ENCODE measurements at regions of chr14 and their contacts with region 1.

Region 1: GRCh38 chr14:104639889-104640548 is 35.4 kb upstream of the TMEM179 start:
- DNase-seq: no peak
- ATAC-seq: peak; percentile 99
- H3K4me3 ChIP-seq: no peak overlapping the region
- H3K27ac ChIP-seq: no peak overlapping the region
- H3K4me1 ChIP-seq: no peaks in the 10 kb centered on the region
- H3K27me3 ChIP-seq: no peaks in the 10 kb centered on the region
- CTCF ChIP-seq: peak; percentile 92 to 94 (median 94)
- EP300 ChIP-seq: no peak
- POLR2A ChIP-seq: no peak
- RAD21 ChIP-seq: peak; percentile 91

Region 2: GRCh38 chr14:104094709-104095438 is 545.1 kb before region 1 on chr14:
- CTCF ChIA-PET with region 1: interaction called, 3 read pairs
- POLR2A ChIA-PET with region 1: no interaction called
- RAD21 ChIA-PET with region 1: no interaction called
- SMC1A ChIA-PET with region 1: no interaction called
- in situ Hi-C with region 1: no loop called
- intact Hi-C with region 1: loop called (anchors 5 kb)
- DNase-seq: no peak
- ATAC-seq: peak; percentile 93
- H3K4me3 ChIP-seq: no peak overlapping the region
- H3K27ac ChIP-seq: no peak overlapping the region
- H3K4me1 ChIP-seq: no peaks in the 10 kb centered on the region
- H3K27me3 ChIP-seq: 0 out of 4 replicates have a peak, but pooled peaks cover 0 to 1% of the 10 kb centered on the region in 2 experiments
- CTCF ChIP-seq: peak; percentile 74 to 89 (median 76)
- EP300 ChIP-seq: no peak
- POLR2A ChIP-seq: no peak
- RAD21 ChIP-seq: peak; percentile 60

Region 3: GRCh38 chr14:104137297-104138097 is 502.5 kb before region 1 on chr14:
- CTCF ChIA-PET with region 1: no interaction called
- POLR2A ChIA-PET with region 1: no interaction called
- RAD21 ChIA-PET with region 1: no interaction called
- SMC1A ChIA-PET with region 1: no interaction called
- in situ Hi-C with region 1: no loop called
- intact Hi-C with region 1: loop called (anchors 1 kb)
- DNase-seq: no peak
- ATAC-seq: peak; percentile 95
- H3K4me3 ChIP-seq: no peak overlapping the region
- H3K27ac ChIP-seq: no peak overlapping the region
- H3K4me1 ChIP-seq: no peaks in the 10 kb centered on the region
- H3K27me3 ChIP-seq: peaks cover 10 to 15% of the 10 kb centered on the region in 2 experiments; a peak in 3 of 4 replicates
- CTCF ChIP-seq: peak; percentile 63 to 75 (median 68)
- EP300 ChIP-seq: no peak
- POLR2A ChIP-seq: no peak
- RAD21 ChIP-seq: peak; percentile 71